ENCODE measurements at regions of chr3 and their contacts with region 1.

Region 1: DNA sequence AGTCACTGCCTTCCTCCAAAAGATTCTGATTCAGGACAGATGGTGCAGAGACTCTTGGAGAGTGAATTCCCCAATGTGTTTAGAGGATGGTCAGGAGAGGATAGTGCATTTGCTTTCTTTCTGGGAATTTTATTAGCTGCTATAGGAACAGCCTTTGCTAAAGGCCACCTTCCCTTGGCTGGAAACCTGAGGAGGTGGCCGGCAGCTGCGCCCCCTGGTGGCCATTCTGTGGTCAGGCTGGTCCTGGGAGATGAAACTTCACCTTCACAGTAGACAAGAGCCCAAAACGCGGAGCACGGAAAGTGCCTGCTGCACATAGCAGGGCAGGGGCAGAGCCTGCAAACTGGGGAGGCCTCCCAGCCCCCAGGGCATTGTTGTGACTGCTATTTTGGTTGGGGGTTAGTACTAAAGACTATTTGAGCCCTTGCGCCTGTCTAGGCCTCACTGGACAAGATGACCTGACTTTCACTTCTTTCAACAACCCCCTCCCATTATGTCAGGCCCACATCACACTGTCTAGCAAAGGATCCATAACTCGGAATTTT is 34.3 kb downstream of the SEC22C start:
- DNase-seq: no peak
- H3K4me3 ChIP-seq: no peak overlapping the region
- CTCF ChIP-seq: peak; percentile 96

Region 2: DNA sequence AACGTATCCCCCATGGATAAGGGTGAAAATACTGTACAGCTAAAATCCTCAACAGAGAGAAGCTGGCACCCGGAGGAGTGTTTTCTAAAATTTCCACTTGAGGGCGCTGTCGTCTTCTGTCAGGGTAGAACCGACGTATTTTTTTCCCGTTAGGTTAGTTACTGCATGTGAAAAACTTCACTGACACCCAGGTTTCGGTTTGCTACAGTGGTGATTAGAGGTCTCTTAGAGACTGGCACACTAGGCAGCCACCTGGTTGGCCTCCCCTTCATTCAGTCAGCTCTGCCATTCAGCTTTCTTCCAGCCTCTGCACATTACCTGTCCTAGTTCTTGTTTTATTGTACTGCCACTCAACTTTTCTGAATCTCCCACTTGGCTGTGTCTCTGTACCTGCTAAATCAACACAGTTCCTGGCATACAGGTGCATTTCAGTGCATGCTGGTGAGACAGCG is 299.9 kb before region 1 on chr3:
- CTCF ChIA-PET with region 1: interaction called, 107 read pairs
- POLR2A ChIA-PET with region 1: no interaction called
- DNase-seq: no peak
- H3K4me3 ChIP-seq: no peak overlapping the region
- CTCF ChIP-seq: peak; percentile 66

Region 3: DNA sequence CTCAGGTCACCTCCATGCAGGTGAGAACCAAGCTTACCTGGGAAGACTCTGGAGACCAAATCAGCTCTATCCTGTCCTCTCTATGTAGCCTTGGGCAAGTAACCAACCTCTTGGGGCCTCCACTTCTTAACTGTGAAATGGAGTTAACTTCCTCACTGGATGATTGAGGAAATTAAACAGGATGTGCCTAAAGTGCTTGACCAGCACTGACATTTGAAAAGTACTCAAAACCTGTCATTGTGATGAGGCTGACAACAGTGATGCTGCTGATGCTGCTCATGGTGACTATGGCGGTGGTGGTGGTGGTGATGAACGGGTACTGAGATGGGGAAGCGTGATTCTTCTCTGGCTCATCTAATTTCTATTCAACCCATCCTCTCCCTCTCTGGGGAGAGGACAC is 22.7 kb before region 1 on chr3:
- CTCF ChIA-PET with region 1: interaction called, 13 read pairs
- POLR2A ChIA-PET with region 1: no interaction called
- DNase-seq: no peak
- H3K4me3 ChIP-seq: no peak overlapping the region
- CTCF ChIP-seq: no peak

Region 4: DNA sequence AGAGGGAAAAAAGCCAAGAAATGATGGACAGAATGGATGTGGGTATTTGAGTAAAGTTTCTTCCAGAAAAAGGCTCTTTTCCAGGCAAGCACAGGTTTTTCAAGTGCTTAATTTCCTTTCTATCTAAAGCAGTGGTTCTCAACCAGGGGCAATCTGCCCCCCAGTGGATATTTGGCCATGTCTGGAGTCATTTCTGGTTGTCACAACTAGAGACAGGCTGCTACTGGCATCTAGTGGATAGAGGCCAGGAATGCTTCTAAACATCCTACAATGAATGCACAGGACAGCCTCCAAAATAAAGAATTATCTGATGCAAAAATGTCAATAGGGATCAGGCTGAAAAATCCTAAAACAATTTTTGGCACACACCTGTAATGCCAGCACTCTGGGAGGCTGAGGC is 10.4 kb after region 1 on chr3:
- CTCF ChIA-PET with region 1: interaction called, 26 read pairs
- POLR2A ChIA-PET with region 1: no interaction called
- DNase-seq: no peak
- H3K4me3 ChIP-seq: no peak overlapping the region
- CTCF ChIP-seq: no peak

Region 5: GRCh38 chr3:42575137-42575741 is 27.8 kb after region 1 on chr3:
- CTCF ChIA-PET with region 1: interaction called, 21 read pairs
- POLR2A ChIA-PET with region 1: no interaction called
- DNase-seq: no peak
- H3K4me3 ChIP-seq: no peak overlapping the region
- CTCF ChIP-seq: no peak

Region 6: DNA sequence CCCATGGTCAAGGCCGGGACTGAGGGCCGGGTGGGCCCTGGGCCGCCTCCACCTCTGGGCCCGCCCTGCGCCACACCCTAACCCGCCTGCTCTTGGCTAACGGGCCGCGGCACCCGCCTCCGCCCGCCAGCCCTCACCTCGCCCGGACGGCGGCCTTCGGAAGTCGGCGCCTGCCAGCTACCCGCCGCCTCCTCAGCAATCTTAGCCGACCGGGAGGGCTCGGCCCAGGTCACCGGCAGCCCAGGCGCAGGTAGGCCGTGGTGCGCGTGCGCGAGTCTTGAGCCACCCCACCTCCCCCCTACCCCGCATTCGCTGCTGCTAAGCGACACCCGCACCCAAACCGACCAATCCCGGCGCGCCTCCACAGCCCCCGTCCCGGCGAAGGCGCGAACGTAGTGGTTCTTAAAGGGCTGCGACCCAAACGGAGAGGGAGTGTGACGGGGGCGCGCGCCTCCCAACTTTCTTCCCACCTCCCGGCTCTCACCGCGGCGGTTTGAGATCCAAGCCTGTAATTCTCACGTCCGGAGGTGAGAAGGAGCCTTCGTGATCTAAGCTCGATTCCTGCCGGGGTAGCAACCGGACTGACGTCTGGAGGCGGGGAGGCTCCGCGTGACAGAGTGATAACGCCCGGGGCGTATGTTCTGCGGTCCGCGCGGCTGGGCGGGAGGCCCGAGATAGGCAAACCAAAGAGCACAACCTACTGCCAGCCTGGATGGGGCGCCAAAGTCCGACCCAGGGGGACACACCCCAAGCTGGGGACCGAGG is 34.4 kb after region 1 on chr3 and contains the start of gene SEC22C:
- CTCF ChIA-PET with region 1: interaction called, 21 read pairs
- POLR2A ChIA-PET with region 1: no interaction called
- DNase-seq: peak; percentile 46
- H3K4me3 ChIP-seq: peak within 1 kb of the TSS; percentile 73
- CTCF ChIP-seq: no peak